OCI-LY7 (cell line): ENCODE measurements at regions of chr18 and their contacts with region 1.

Region 1: GRCh38 chr18:9614401-9615279 is at the start of gene PPP4R1:
- DNase-seq: peak; percentile 77
- H3K4me3 ChIP-seq: peak within 1 kb of the TSS; percentile 94
- H3K27ac ChIP-seq: peak within 1 kb of the TSS; percentile 59
- H3K4me1 ChIP-seq: peaks cover 20% of the 10 kb centered on the region
- CTCF ChIP-seq: no peak
- total RNA-seq, gene PPP4R1: 64.9 and 95.9 TPM in 2 replicates

Region 2: GRCh38 chr18:9066817-9067306 is 547.8 kb before region 1 on chr18:
- CTCF ChIA-PET with region 1: no interaction called
- POLR2A ChIA-PET with region 1: no interaction called
- intact Hi-C with region 1: loop called (anchors 10 kb)
- DNase-seq: peak; percentile 87
- H3K4me3 ChIP-seq: peak overlapping the region; percentile 30
- H3K27ac ChIP-seq: peak overlapping the region; percentile 94
- H3K4me1 ChIP-seq: peaks cover 86% of the 10 kb centered on the region
- CTCF ChIP-seq: no peak

Region 3: GRCh38 chr18:9627642-9628041 is 13.0 kb after region 1 on chr18:
- CTCF ChIA-PET with region 1: no interaction called
- POLR2A ChIA-PET with region 1: interaction called, 4 read pairs
- intact Hi-C with region 1: loop called (anchors 1 kb)
- DNase-seq: no peak
- H3K4me3 ChIP-seq: no peak overlapping the region
- H3K27ac ChIP-seq: no peak overlapping the region
- H3K4me1 ChIP-seq: no peaks in the 10 kb centered on the region
- CTCF ChIP-seq: no peak

Region 4: GRCh38 chr18:9707381-9708056 is 92.9 kb after region 1 on chr18:
- CTCF ChIA-PET with region 1: no interaction called
- POLR2A ChIA-PET with region 1: no interaction called
- intact Hi-C with region 1: no loop called
- DNase-seq: no peak
- H3K4me3 ChIP-seq: no peak overlapping the region
- H3K27ac ChIP-seq: no peak overlapping the region
- H3K4me1 ChIP-seq: no peaks in the 10 kb centered on the region
- CTCF ChIP-seq: no peak

Region 5: GRCh38 chr18:9869715-9870430 is 255.2 kb after region 1 on chr18:
- CTCF ChIA-PET with region 1: no interaction called
- POLR2A ChIA-PET with region 1: no interaction called
- intact Hi-C with region 1: no loop called
- DNase-seq: peak; percentile 13
- H3K4me3 ChIP-seq: no peak overlapping the region
- H3K27ac ChIP-seq: no peak overlapping the region
- H3K4me1 ChIP-seq: peaks cover 6% of the 10 kb centered on the region
- CTCF ChIP-seq: no peak

Region 6: GRCh38 chr18:9913526-9914333 is 299.1 kb after region 1 on chr18 and contains the start of gene VAPA:
- CTCF ChIA-PET with region 1: no interaction called
- POLR2A ChIA-PET with region 1: interaction called, 4 read pairs
- intact Hi-C with region 1: loop called (anchors 2 kb)
- DNase-seq: peak; percentile 97
- H3K4me3 ChIP-seq: peak within 1 kb of the TSS; percentile 99
- H3K27ac ChIP-seq: peak within 1 kb of the TSS; percentile 81
- H3K4me1 ChIP-seq: peaks cover 33% of the 10 kb centered on the region
- CTCF ChIP-seq: no peak
- total RNA-seq, gene VAPA: 176 and 184 TPM in 2 replicates

Region 7: GRCh38 chr18:9951022-9951859 is 336.6 kb after region 1 on chr18:
- CTCF ChIA-PET with region 1: no interaction called
- POLR2A ChIA-PET with region 1: no interaction called
- intact Hi-C with region 1: loop called (anchors 2 kb)
- DNase-seq: peak; percentile 45
- H3K4me3 ChIP-seq: no peak overlapping the region
- H3K27ac ChIP-seq: no peak overlapping the region
- H3K4me1 ChIP-seq: no peaks in the 10 kb centered on the region
- CTCF ChIP-seq: peak; percentile 71

Region 8: GRCh38 chr18:10401521-10401920 is 786.9 kb after region 1 on chr18:
- CTCF ChIA-PET with region 1: no interaction called
- POLR2A ChIA-PET with region 1: no interaction called
- intact Hi-C with region 1: no loop called
- DNase-seq: no peak
- H3K4me3 ChIP-seq: no peak overlapping the region
- H3K27ac ChIP-seq: no peak overlapping the region
- H3K4me1 ChIP-seq: no peaks in the 10 kb centered on the region
- CTCF ChIP-seq: no peak

Region 9: DNA sequence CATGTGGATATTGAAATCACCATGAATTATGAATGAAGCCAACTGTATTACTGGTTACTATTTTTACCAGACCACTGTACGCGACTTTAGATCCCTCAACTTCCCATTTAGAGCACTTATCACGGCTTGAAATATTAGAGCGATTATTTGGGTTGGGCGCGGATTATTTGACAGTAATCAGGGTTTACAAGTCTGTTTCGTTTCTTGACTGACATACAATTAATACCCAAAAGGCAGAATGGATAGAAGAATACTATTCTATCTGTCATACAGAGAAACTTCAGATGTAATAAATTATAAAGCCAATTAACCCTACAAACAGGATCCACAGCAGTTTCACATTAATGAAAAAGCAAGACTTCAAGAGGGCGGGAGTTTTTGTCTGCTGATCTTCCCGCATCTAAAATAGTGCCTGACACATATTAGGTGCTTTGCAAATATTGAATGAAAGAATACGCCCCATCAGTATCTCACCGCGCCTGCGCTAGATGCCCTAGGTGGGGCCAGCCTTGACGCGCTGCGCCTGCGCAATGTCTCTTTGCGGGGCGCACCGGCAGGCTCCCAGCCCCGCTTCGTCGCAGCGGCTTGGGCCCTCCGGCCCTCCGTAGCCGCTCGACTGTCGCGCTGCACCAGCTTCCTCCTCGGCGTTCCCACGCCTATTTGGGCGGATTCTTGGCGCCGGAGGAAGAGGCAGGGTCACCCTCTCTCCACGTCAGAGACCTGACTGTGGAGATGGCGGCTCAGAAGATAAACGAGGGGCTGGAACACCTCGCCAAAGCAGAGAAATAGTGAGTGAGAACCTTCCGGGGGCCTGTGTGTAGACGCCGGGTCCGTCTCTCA is 911.0 kb after region 1 on chr18 and contains the start of gene NAPG:
- CTCF ChIA-PET with region 1: no interaction called
- POLR2A ChIA-PET with region 1: interaction called, 3 read pairs
- intact Hi-C with region 1: loop called (anchors 10 kb)
- DNase-seq: peak; percentile 95
- H3K4me3 ChIP-seq: peak within 1 kb of the TSS; percentile 81
- H3K27ac ChIP-seq: peak within 1 kb of the TSS; percentile 63
- H3K4me1 ChIP-seq: peaks cover 43% of the 10 kb centered on the region
- CTCF ChIP-seq: no peak
- total RNA-seq, gene NAPG: 34.6 and 41.4 TPM in 2 replicates